ENCODE measurements at regions of chr14 and their contacts with region 1.

Region 1: DNA sequence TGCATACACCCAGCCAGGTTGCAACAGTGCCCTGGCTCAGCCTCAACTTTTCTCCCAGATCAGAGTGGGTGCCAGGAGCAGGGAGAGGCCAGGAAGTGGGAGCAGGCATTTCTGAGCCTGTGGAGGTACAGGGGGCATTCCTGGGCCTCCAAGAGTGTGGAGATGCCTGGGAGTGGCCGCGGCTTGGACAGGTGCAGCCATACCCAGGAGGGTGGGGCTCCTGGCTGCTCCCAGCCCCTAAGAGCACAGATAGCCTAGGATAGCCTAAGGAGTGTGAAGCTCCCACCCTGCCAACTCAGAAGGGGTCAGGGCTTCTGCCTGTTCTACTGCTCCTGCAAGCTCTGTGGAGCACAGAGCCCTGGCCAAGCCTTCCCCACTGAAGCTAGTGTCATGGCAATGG is 543.4 kb downstream of the RPL10L start:
- DNase-seq: no peak
- H3K4me3 ChIP-seq: no peak overlapping the region
- CTCF ChIP-seq: no peak
- POLR2A ChIP-seq: no peak

Region 2: GRCh38 chr14:47509957-47510356 is 1401.7 kb after region 1 on chr14:
- intact Hi-C with region 1: loop called (anchors 10 kb)
- DNase-seq: no peak
- H3K4me3 ChIP-seq: no peak overlapping the region
- CTCF ChIP-seq: no peak
- POLR2A ChIP-seq: no peak

Measured in lower leg skin (tissue), 4 donors.